Panc1 (cell line): ENCODE measurements at regions of chr16 and their contacts with region 1.

Region 1: DNA sequence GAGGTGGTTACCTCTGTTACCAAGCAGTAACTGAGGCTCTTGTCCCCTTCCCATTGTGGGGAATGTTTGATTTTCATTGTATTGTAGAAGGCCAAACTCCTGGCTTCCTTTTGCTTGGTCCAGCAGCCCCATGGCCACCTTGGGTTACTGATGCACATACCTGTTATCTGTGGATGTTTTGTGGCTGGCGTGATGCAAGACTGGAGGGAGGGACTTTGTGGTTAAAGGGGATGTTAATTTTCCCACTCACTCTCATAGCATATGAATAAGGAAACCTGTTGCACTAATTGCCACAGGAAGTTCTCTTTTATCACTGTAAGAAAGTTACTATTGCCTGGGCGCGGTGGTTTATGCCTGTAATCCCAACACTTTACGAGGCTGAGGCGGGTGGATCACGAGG is 168.6 kb upstream of the HS3ST4 start:
- DNase-seq: no peak
- ATAC-seq: no peak
- H3K4me3 ChIP-seq: no peak overlapping the region
- H3K27ac ChIP-seq: no peak overlapping the region
- H3K4me1 ChIP-seq: no peaks in the 10 kb centered on the region
- H3K27me3 ChIP-seq: no peaks in the 10 kb centered on the region
- CTCF ChIP-seq: no peak

Region 2: GRCh38 chr16:25257504-25257955 is 265.7 kb before region 1 on chr16 and contains the start of gene ZKSCAN2:
- CTCF ChIA-PET with region 1: no interaction called
- POLR2A ChIA-PET with region 1: interaction called, 11 read pairs
- in situ Hi-C with region 1: no loop called
- intact Hi-C with region 1: no loop called
- DNase-seq: peak; percentile 20
- ATAC-seq: peak; percentile 93
- H3K4me3 ChIP-seq: peak within 1 kb of the TSS; percentile 78 to 90
- H3K27ac ChIP-seq: peak within 1 kb of the TSS; percentile 85
- H3K4me1 ChIP-seq: peaks cover 4% of the 10 kb centered on the region; the same call in 1 of the 2 replicates
- H3K27me3 ChIP-seq: no peaks in the 10 kb centered on the region
- CTCF ChIP-seq: no peak
- total RNA-seq, gene ZKSCAN2: 11.4 TPM

Region 3: DNA sequence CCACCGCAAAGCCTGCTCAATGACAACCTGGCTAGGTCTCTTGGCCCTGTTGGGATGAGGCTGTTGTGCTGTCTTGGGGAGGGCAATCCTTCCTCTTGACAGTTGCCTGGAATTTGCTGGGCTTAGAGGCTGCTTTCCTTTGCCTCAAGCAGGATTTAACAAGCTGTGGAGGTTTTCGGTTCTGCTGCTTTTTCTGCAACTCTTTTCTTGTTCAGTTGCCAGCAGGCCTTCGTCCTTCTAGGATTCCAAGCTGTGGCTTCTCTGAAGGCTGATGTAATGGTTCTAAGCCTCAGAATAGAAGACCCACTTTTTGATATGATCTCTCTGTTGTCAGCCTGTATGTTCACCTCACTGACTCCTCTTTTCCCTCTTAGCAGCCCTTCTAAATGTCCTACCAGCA is 19.1 kb after region 1 on chr16:
- CTCF ChIA-PET with region 1: no interaction called
- POLR2A ChIA-PET with region 1: interaction called, 10 read pairs
- in situ Hi-C with region 1: no loop called
- intact Hi-C with region 1: no loop called
- DNase-seq: no peak
- ATAC-seq: no peak
- H3K4me3 ChIP-seq: no peak overlapping the region
- H3K27ac ChIP-seq: no peak overlapping the region
- H3K4me1 ChIP-seq: no peaks in the 10 kb centered on the region
- H3K27me3 ChIP-seq: no peaks in the 10 kb centered on the region
- CTCF ChIP-seq: no peak

Region 4: DNA sequence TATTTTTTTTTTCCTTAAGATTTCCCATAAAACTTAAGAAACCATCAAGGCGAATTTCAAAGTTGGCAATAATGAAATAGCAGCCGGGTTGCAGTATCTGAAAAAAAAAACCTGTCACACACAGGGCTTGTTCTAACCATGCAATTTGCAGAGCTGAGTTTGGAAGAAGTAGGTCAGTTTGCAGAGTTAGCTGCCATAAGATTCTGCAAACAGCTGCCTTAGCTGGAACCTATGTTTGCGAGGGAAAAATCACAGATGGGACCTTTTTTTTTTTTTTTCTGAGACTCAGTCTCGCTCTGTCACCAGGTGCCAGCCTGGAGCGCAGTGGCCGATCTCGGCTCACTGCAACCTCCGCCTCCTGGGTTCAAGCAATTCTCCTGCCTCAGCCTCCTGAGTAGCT is 70.1 kb after region 1 on chr16:
- CTCF ChIA-PET with region 1: no interaction called
- POLR2A ChIA-PET with region 1: no interaction called
- in situ Hi-C with region 1: no loop called
- intact Hi-C with region 1: no loop called
- DNase-seq: no peak
- ATAC-seq: no peak
- H3K4me3 ChIP-seq: no peak overlapping the region
- H3K27ac ChIP-seq: no peak overlapping the region
- H3K4me1 ChIP-seq: no peaks in the 10 kb centered on the region
- H3K27me3 ChIP-seq: no peaks in the 10 kb centered on the region
- CTCF ChIP-seq: no peak